PC-3 (cell line): ENCODE measurements at regions of chr5 and their contacts with region 1.

Region 1: GRCh38 chr5:135034236-135034962 is 371 bp upstream of the PITX1 start:
- DNase-seq: peak; percentile 65
- ATAC-seq: peak; percentile 66
- H3K4me3 ChIP-seq: peak overlapping the region; percentile 99
- H3K27ac ChIP-seq: peak overlapping the region; percentile 78
- H3K4me1 ChIP-seq: peaks cover 13% of the 10 kb centered on the region
- H3K27me3 ChIP-seq: no peaks in the 10 kb centered on the region
- CTCF ChIP-seq: no peak

Region 2: DNA sequence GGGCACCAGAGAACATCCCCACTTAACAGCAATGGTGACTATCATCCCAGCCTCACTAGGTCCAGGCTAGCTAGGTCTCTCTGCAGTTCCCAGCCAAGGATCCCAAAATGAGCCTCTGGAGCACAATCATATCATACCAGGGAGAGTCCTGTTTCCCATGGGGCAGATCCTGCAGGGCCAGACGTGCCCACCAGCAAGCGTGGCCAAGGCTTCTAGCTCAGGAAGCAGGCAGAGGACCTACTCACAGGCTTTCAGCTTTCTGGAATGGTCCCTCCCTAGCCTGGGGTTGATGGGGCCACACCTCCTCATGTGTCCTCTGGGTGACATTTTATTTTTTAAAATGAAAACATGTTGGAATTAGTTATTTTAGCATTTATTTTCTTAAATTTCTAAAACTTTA is 45.4 kb after region 1 on chr5:
- CTCF ChIA-PET with region 1: no interaction called
- POLR2A ChIA-PET with region 1: no interaction called
- intact Hi-C with region 1: loop called (anchors 5 kb)
- DNase-seq: no peak
- ATAC-seq: peak; percentile 59
- H3K4me3 ChIP-seq: no peak overlapping the region
- H3K27ac ChIP-seq: no peak overlapping the region
- H3K4me1 ChIP-seq: peaks cover 5% of the 10 kb centered on the region
- H3K27me3 ChIP-seq: no peaks in the 10 kb centered on the region
- CTCF ChIP-seq: no peak

Region 3: DNA sequence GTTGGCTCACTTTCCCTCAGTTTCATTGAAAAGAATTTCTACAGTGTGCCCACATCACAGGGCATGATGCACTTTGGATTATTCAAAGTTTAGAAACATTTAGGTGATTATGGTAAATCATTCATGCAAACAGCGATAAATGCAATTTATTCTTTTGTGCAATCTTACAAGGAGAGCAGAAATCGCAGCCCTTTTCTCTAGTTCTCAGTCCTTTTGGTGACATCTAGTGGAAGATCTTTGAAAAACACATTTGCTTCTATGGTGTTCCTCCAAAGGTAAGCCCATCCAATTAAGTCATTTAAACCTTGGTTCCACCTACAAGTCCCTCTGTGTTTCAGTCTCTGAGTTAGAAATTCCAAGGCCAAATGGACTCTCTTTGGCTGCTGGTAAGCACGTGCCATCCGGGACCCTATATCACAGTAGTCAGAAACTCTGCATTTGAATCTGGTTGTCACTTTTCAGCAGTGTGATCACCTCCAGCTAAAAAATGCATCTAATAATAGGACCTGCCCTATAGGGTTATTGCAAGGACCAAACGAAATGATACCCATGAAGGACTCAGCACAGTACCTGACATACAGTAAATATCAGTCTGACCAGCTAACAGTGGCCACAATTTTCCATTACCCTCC is 298.2 kb after region 1 on chr5:
- CTCF ChIA-PET with region 1: no interaction called
- POLR2A ChIA-PET with region 1: no interaction called
- intact Hi-C with region 1: loop called (anchors 5 kb)
- DNase-seq: peak; percentile 80
- ATAC-seq: peak; percentile 63
- H3K4me3 ChIP-seq: no peak overlapping the region
- H3K27ac ChIP-seq: no peak overlapping the region
- H3K4me1 ChIP-seq: no peaks in the 10 kb centered on the region
- H3K27me3 ChIP-seq: no peaks in the 10 kb centered on the region
- CTCF ChIP-seq: peak; percentile 70